Activated T-helper 1 cell treated with anti-CD3 and anti-CD28 coated beads, Interleukin-12 subunit alpha, Interleukin-12 subunit beta, Interleukin-2, Interleukin-4 antibody, amounts not matched to agents 30 ng/mL and 10 ng/mL and 1 ng/mL, durations not matched to agents 14 hours and 24 hours and 36 hours (primary cell): ENCODE measurements at regions of chr13 and their contacts with region 1.

Region 1: GRCh38 chr13:40318366-40318765 is 348.1 kb downstream of the FOXO1 start:
- DNase-seq: no peak
- H3K4me3 Mint-ChIP-seq: no peak overlapping the region
- H3K27ac Mint-ChIP-seq: no peak overlapping the region
- H3K4me1 Mint-ChIP-seq: peaks cover 70% of the 10 kb centered on the region
- H3K27me3 Mint-ChIP-seq: no peaks in the 10 kb centered on the region

Region 2: DNA sequence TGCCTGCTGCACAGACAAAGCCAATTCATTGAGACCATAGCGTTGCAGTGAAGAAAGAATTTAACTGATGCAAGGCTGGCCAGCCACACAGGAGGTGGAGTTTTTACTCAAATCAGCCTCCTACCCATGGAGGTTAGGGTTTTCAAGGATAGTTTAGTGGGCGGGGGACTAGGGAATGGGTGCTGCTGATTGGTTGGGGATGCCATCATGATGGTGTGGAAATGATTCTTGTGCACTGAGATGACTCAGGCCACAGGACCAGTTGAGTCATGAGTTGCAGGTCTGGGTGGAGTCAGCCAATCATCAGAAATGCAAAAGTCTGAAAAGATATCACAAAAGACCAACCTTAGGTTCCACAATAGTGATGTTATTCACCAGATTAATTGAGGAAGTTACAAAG is 11.5 kb before region 1 on chr13:
- intact Hi-C with region 1: loop called (anchors 2 kb)
- DNase-seq: no peak
- H3K4me3 Mint-ChIP-seq: peak overlapping the region; percentile 1
- H3K27ac Mint-ChIP-seq: peak overlapping the region; percentile 1
- H3K4me1 Mint-ChIP-seq: peaks cover 25% of the 10 kb centered on the region
- H3K27me3 Mint-ChIP-seq: no peaks in the 10 kb centered on the region

Region 3: DNA sequence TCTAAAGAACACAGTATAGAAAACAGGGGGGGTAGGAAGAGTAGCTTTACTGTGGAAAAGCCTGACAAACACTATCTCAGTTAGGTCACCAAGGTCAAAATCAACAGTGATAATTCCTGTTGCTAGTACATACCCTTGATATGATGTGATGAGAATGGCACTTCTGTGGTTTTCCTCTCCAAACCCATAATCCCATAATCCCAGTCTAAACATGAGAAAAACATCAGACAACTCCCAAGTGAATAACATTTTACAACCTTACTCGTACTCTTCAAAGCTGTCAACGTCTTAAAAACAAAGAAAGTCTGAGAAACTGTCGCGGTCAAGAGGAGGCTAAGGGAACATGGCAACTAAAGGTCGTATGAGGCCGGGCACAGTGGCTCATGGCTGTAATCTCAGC is 210.5 kb after region 1 on chr13:
- intact Hi-C with region 1: no loop called
- DNase-seq: no peak
- H3K4me3 Mint-ChIP-seq: no peak overlapping the region
- H3K27ac Mint-ChIP-seq: no peak overlapping the region
- H3K4me1 Mint-ChIP-seq: peaks cover 10% of the 10 kb centered on the region
- H3K27me3 Mint-ChIP-seq: no peaks in the 10 kb centered on the region

Region 4: GRCh38 chr13:41008349-41008980 is 690.1 kb after region 1 on chr13:
- intact Hi-C with region 1: no loop called
- DNase-seq: no peak
- H3K4me3 Mint-ChIP-seq: peak overlapping the region; percentile 61
- H3K27ac Mint-ChIP-seq: peak overlapping the region; percentile 84
- H3K4me1 Mint-ChIP-seq: peaks cover 73% of the 10 kb centered on the region
- H3K27me3 Mint-ChIP-seq: no peaks in the 10 kb centered on the region